ENCODE measurements at regions of chr12 and their contacts with region 1.

Region 1: GRCh38 chr12:94101738-94102660 is 46.4 kb upstream of the PLXNC1 start:
- DNase-seq: peak; percentile 67 to 92 (median 79)
- ATAC-seq: peak; percentile 83 to 86 (median 85)
- H3K4me3 ChIP-seq: peak overlapping the region; percentile 73 to 80
- H3K4me3 Mint-ChIP-seq: peak overlapping the region; percentile 81 to 85 (median 85)
- H3K27ac ChIP-seq: peak overlapping the region; percentile 48
- H3K27ac Mint-ChIP-seq: peak overlapping the region; percentile 53 to 66
- H3K4me1 ChIP-seq: peaks cover 8 to 20% of the 10 kb centered on the region in 2 experiments
- H3K4me1 Mint-ChIP-seq: peaks cover 16 to 27% (median 21%) of the 10 kb centered on the region in 3 donors
- H3K27me3 ChIP-seq: peaks cover 0 to 24% of the 10 kb centered on the region in 2 experiments
- H3K27me3 Mint-ChIP-seq: peaks cover 9 to 19% of the 10 kb centered on the region in 2 donors

Region 2: GRCh38 chr12:93098077-93098476 is 1003.9 kb before region 1 on chr12:
- CTCF ChIA-PET with region 1: interaction called, 4 to 13 read pairs
- POLR2A ChIA-PET with region 1: no interaction called
- DNase-seq: peak; percentile 26 to 82 (median 60)
- ATAC-seq: peak; percentile 45 to 83 (median 48)
- H3K4me3 ChIP-seq: no peak overlapping the region
- H3K4me3 Mint-ChIP-seq: no peak overlapping the region
- H3K27ac ChIP-seq: no peak overlapping the region
- H3K27ac Mint-ChIP-seq: no peak overlapping the region
- H3K4me1 ChIP-seq: peaks cover 0 to 4% of the 10 kb centered on the region in 2 experiments
- H3K4me1 Mint-ChIP-seq: peaks cover 6 to 7% (median 7%) of the 10 kb centered on the region in 3 donors
- H3K27me3 ChIP-seq: no peaks in the 10 kb centered on the region
- H3K27me3 Mint-ChIP-seq: no peaks in the 10 kb centered on the region

Region 3: GRCh38 chr12:93502802-93503623 is 599.0 kb before region 1 on chr12:
- CTCF ChIA-PET with region 1: interaction called, 142 to 294 read pairs
- POLR2A ChIA-PET with region 1: interaction called in 1 of 2 experiments, 4 read pairs
- DNase-seq: peak; percentile 5 to 78 (median 54)
- ATAC-seq: peak in 1 of 4 experiments; percentile 46
- H3K4me3 ChIP-seq: no peak overlapping the region
- H3K4me3 Mint-ChIP-seq: no peak overlapping the region
- H3K27ac ChIP-seq: no peak overlapping the region
- H3K27ac Mint-ChIP-seq: no peak overlapping the region
- H3K4me1 ChIP-seq: no peaks in the 10 kb centered on the region
- H3K4me1 Mint-ChIP-seq: peaks cover 0 to 7% (median 0%) of the 10 kb centered on the region in 3 donors
- H3K27me3 ChIP-seq: no peaks in the 10 kb centered on the region
- H3K27me3 Mint-ChIP-seq: no peaks in the 10 kb centered on the region

Region 4: GRCh38 chr12:93569656-93570551 is 532.1 kb before region 1 on chr12:
- CTCF ChIA-PET with region 1: interaction called, 21 to 37 read pairs
- POLR2A ChIA-PET with region 1: interaction called, 3 to 11 read pairs
- DNase-seq: peak; percentile 31 to 81 (median 58)
- ATAC-seq: peak; percentile 60 to 66 (median 64)
- H3K4me3 ChIP-seq: peak overlapping the region; percentile 86 to 97
- H3K4me3 Mint-ChIP-seq: peak overlapping the region; percentile 86 to 95 (median 90)
- H3K27ac ChIP-seq: peak overlapping the region; percentile 71
- H3K27ac Mint-ChIP-seq: peak overlapping the region; percentile 68 to 89
- H3K4me1 ChIP-seq: peaks cover 8 to 25% of the 10 kb centered on the region in 2 experiments
- H3K4me1 Mint-ChIP-seq: peaks cover 16 to 32% (median 32%) of the 10 kb centered on the region in 3 donors
- H3K27me3 ChIP-seq: peaks cover 0 to 18% of the 10 kb centered on the region in 2 experiments
- H3K27me3 Mint-ChIP-seq: peaks cover 0 to 7% of the 10 kb centered on the region in 2 donors

Region 5: GRCh38 chr12:93766796-93767523 is 335.0 kb before region 1 on chr12:
- CTCF ChIA-PET with region 1: interaction called, 95 to 102 read pairs
- POLR2A ChIA-PET with region 1: no interaction called
- DNase-seq: peak in 18 of 35 experiments; percentile 6 to 60 (median 27)
- ATAC-seq: peak; percentile 66 to 93 (median 76)
- H3K4me3 ChIP-seq: no peak overlapping the region
- H3K4me3 Mint-ChIP-seq: peak overlapping the region in 1 of 3 donors; percentile 0
- H3K27ac ChIP-seq: peak overlapping the region; percentile 36
- H3K27ac Mint-ChIP-seq: peak overlapping the region; percentile 1 to 41
- H3K4me1 ChIP-seq: peaks cover 0 to 15% of the 10 kb centered on the region in 2 experiments
- H3K4me1 Mint-ChIP-seq: peaks cover 26 to 51% (median 35%) of the 10 kb centered on the region in 3 donors
- H3K27me3 ChIP-seq: no peaks in the 10 kb centered on the region
- H3K27me3 Mint-ChIP-seq: no peaks in the 10 kb centered on the region

Region 6: GRCh38 chr12:94047741-94048567 is 54.0 kb before region 1 on chr12:
- CTCF ChIA-PET with region 1: no interaction called
- POLR2A ChIA-PET with region 1: no interaction called
- DNase-seq: no peak
- ATAC-seq: no peak
- H3K4me3 ChIP-seq: no peak overlapping the region
- H3K4me3 Mint-ChIP-seq: peak overlapping the region in 1 of 3 donors; percentile 41
- H3K27ac ChIP-seq: no peak overlapping the region
- H3K27ac Mint-ChIP-seq: peak overlapping the region in 1 of 2 donors; percentile 41
- H3K4me1 ChIP-seq: peaks cover 0 to 10% of the 10 kb centered on the region in 2 experiments
- H3K4me1 Mint-ChIP-seq: peaks cover 10 to 23% (median 15%) of the 10 kb centered on the region in 3 donors
- H3K27me3 ChIP-seq: peaks cover 0 to 3% of the 10 kb centered on the region in 2 experiments
- H3K27me3 Mint-ChIP-seq: peaks cover 0 to 2% of the 10 kb centered on the region in 2 donors

Region 7: DNA sequence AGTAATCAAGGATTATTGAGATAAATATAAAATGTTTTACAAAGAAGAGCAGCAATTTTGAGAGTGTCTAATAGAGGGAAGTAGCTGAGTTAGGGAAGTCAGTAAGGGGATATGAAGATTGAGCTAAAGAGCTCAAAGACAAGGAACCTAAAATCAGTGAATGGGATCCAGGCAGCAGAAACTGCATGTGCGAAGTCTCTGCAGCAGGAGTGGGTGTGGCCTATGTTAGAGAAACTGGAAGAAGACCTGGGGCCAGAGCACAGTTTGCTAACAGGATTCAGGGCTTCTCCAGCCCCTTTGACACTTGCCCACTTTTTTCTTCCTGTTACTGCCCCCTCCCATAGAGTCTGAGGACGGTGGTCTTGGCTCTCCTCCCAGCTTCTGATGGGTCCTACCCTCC is 10.1 kb after region 1 on chr12:
- CTCF ChIA-PET with region 1: interaction called, 6 to 15 read pairs
- POLR2A ChIA-PET with region 1: no interaction called
- DNase-seq: no peak
- ATAC-seq: no peak
- H3K4me3 ChIP-seq: no peak overlapping the region
- H3K4me3 Mint-ChIP-seq: no peak overlapping the region
- H3K27ac ChIP-seq: no peak overlapping the region
- H3K27ac Mint-ChIP-seq: no peak overlapping the region
- H3K4me1 ChIP-seq: no peaks in the 10 kb centered on the region
- H3K4me1 Mint-ChIP-seq: peaks cover 0 to 9% (median 0%) of the 10 kb centered on the region in 3 donors
- H3K27me3 ChIP-seq: peaks cover 0 to 13% of the 10 kb centered on the region in 2 experiments
- H3K27me3 Mint-ChIP-seq: no peaks in the 10 kb centered on the region

Measured in T-cell (primary cell).